ENCODE measurements at regions of chr2 and their contacts with region 1.

Region 1: GRCh38 chr2:16773080-16773713 is 107.6 kb upstream of the CYRIA start:
- DNase-seq: peak; percentile 43
- ATAC-seq: peak; percentile 81
- H3K4me3 ChIP-seq: no peak overlapping the region
- H3K27ac ChIP-seq: no peak overlapping the region
- H3K4me1 ChIP-seq: peaks cover 7% of the 10 kb centered on the region; the same call in 1 of the 2 replicates
- H3K27me3 ChIP-seq: no peaks in the 10 kb centered on the region
- CTCF ChIP-seq: peak; percentile 89
- EP300 ChIP-seq: no peak
- POLR2A ChIP-seq: no peak
- RAD21 ChIP-seq: peak; percentile 73

Region 2: GRCh38 chr2:16900405-16901025 is 127.3 kb after region 1 on chr2:
- CTCF ChIA-PET with region 1: interaction called, 112 read pairs
- POLR2A ChIA-PET with region 1: no interaction called
- in situ Hi-C with region 1: loop called (anchors 5 kb)
- intact Hi-C with region 1: loop called (anchors 1 kb)
- DNase-seq: peak; percentile 55
- ATAC-seq: peak; percentile 98
- H3K4me3 ChIP-seq: no peak overlapping the region
- H3K27ac ChIP-seq: no peak overlapping the region
- H3K4me1 ChIP-seq: no peaks in the 10 kb centered on the region
- H3K27me3 ChIP-seq: no peaks in the 10 kb centered on the region
- CTCF ChIP-seq: peak; percentile 82
- EP300 ChIP-seq: no peak
- POLR2A ChIP-seq: no peak
- RAD21 ChIP-seq: peak; percentile 73

Region 3: GRCh38 chr2:17148407-17149145 is 375.4 kb after region 1 on chr2:
- CTCF ChIA-PET with region 1: interaction called, 4 read pairs
- POLR2A ChIA-PET with region 1: no interaction called
- in situ Hi-C with region 1: loop called (anchors 5 kb)
- intact Hi-C with region 1: no loop called
- DNase-seq: peak; percentile 10
- ATAC-seq: peak; percentile 92
- H3K4me3 ChIP-seq: no peak overlapping the region
- H3K27ac ChIP-seq: no peak overlapping the region
- H3K4me1 ChIP-seq: no peaks in the 10 kb centered on the region
- H3K27me3 ChIP-seq: no peaks in the 10 kb centered on the region
- CTCF ChIP-seq: peak; percentile 53
- EP300 ChIP-seq: no peak
- POLR2A ChIP-seq: no peak
- RAD21 ChIP-seq: no peak

Region 4: GRCh38 chr2:17672583-17673317 is 899.6 kb after region 1 on chr2:
- CTCF ChIA-PET with region 1: no interaction called
- POLR2A ChIA-PET with region 1: no interaction called
- in situ Hi-C with region 1: loop called (anchors 10 kb)
- intact Hi-C with region 1: loop called (anchors 10 kb)
- DNase-seq: no peak
- ATAC-seq: no peak; the same call in 2 of the 3 replicates
- H3K4me3 ChIP-seq: no peak overlapping the region
- H3K27ac ChIP-seq: no peak overlapping the region
- H3K4me1 ChIP-seq: no peaks in the 10 kb centered on the region
- H3K27me3 ChIP-seq: no peaks in the 10 kb centered on the region
- CTCF ChIP-seq: no peak
- EP300 ChIP-seq: no peak
- POLR2A ChIP-seq: no peak
- RAD21 ChIP-seq: no peak